CD4-positive, alpha-beta T cell (primary cell): ENCODE measurements at regions of chr2 and their contacts with region 1.

Region 1: GRCh38 chr2:234425619-234426603 is 71.0 kb downstream of the ARL4C start:
- DNase-seq: peak; percentile 70 to 95 (median 82)
- ATAC-seq: peak; percentile 70
- H3K4me3 ChIP-seq: peak overlapping the region; percentile 5
- H3K4me3 Mint-ChIP-seq: peak overlapping the region; percentile 88
- H3K27ac ChIP-seq: peak overlapping the region; percentile 78 to 87
- H3K27ac Mint-ChIP-seq: peak overlapping the region; percentile 97
- H3K4me1 ChIP-seq: peaks cover 90% of the 10 kb centered on the region
- H3K4me1 Mint-ChIP-seq: peaks cover 97% of the 10 kb centered on the region
- H3K27me3 ChIP-seq: no peaks in the 10 kb centered on the region
- H3K27me3 Mint-ChIP-seq: no peaks in the 10 kb centered on the region
- CTCF ChIP-seq: no peak

Region 2: GRCh38 chr2:234308813-234309195 is 117.1 kb before region 1 on chr2:
- CTCF ChIA-PET with region 1: interaction called, 3 read pairs
- POLR2A ChIA-PET with region 1: no interaction called
- intact Hi-C with region 1: loop called in 1 of 2 experiments (anchors 1 kb)
- DNase-seq: peak; percentile 39 to 94 (median 56)
- ATAC-seq: peak; percentile 86
- H3K4me3 ChIP-seq: no peak overlapping the region
- H3K4me3 Mint-ChIP-seq: peak overlapping the region; percentile 68
- H3K27ac ChIP-seq: peak overlapping the region; percentile 50 to 56
- H3K27ac Mint-ChIP-seq: peak overlapping the region; percentile 88
- H3K4me1 ChIP-seq: peaks cover 25% of the 10 kb centered on the region
- H3K4me1 Mint-ChIP-seq: peaks cover 62% of the 10 kb centered on the region
- H3K27me3 ChIP-seq: no peaks in the 10 kb centered on the region
- H3K27me3 Mint-ChIP-seq: no peaks in the 10 kb centered on the region
- CTCF ChIP-seq: no peak

Region 3: DNA sequence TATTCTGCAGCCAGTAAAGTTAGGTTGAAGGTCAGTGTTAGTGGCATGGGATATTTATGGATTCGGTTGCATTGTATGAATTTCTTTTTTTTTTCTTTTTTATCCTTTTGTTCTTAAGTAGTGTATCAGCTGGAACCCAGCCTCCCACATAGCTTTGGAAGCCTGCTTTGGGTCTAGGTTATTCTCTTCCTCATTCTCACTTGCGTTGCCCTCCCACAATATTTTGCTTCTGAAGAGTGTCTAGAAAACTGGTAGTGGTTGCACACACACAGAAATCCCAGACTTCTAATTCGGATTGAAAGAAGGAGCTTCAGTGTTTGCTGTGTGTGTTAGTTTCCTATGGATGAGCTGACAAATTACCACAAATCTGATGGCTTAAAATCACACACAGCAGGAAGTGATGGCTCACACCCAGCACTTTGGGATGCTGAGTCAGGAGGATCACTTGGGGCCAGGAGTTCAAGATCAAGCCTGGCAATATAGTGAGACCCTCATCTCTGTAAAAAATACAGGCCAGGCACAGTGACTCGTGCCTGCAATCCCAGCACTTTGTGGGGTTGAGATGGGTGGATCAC is 33.8 kb before region 1 on chr2:
- CTCF ChIA-PET with region 1: no interaction called
- POLR2A ChIA-PET with region 1: interaction called, 9 read pairs
- intact Hi-C with region 1: loop called in 1 of 2 experiments (anchors 2 kb)
- DNase-seq: no peak
- ATAC-seq: no peak
- H3K4me3 ChIP-seq: no peak overlapping the region
- H3K4me3 Mint-ChIP-seq: no peak overlapping the region
- H3K27ac ChIP-seq: peak overlapping the region; percentile 17 to 26
- H3K27ac Mint-ChIP-seq: peak overlapping the region; percentile 96
- H3K4me1 ChIP-seq: peaks cover 43% of the 10 kb centered on the region
- H3K4me1 Mint-ChIP-seq: peaks cover 68% of the 10 kb centered on the region
- H3K27me3 ChIP-seq: no peaks in the 10 kb centered on the region
- H3K27me3 Mint-ChIP-seq: no peaks in the 10 kb centered on the region
- CTCF ChIP-seq: no peak

Region 4: GRCh38 chr2:234446404-234447076 is 20.6 kb after region 1 on chr2:
- CTCF ChIA-PET with region 1: interaction called, 9 read pairs
- POLR2A ChIA-PET with region 1: interaction called, 376 read pairs
- intact Hi-C with region 1: loop called in 1 of 2 experiments (anchors 1 kb)
- DNase-seq: peak; percentile 61 to 96 (median 74)
- ATAC-seq: peak; percentile 81
- H3K4me3 ChIP-seq: peak overlapping the region; percentile 18
- H3K4me3 Mint-ChIP-seq: peak overlapping the region; percentile 57
- H3K27ac ChIP-seq: peak overlapping the region; percentile 85 to 93
- H3K27ac Mint-ChIP-seq: peak overlapping the region; percentile 92
- H3K4me1 ChIP-seq: peaks cover 74% of the 10 kb centered on the region
- H3K4me1 Mint-ChIP-seq: peaks cover 86% of the 10 kb centered on the region
- H3K27me3 ChIP-seq: no peaks in the 10 kb centered on the region
- H3K27me3 Mint-ChIP-seq: no peaks in the 10 kb centered on the region
- CTCF ChIP-seq: no peak

Region 5: DNA sequence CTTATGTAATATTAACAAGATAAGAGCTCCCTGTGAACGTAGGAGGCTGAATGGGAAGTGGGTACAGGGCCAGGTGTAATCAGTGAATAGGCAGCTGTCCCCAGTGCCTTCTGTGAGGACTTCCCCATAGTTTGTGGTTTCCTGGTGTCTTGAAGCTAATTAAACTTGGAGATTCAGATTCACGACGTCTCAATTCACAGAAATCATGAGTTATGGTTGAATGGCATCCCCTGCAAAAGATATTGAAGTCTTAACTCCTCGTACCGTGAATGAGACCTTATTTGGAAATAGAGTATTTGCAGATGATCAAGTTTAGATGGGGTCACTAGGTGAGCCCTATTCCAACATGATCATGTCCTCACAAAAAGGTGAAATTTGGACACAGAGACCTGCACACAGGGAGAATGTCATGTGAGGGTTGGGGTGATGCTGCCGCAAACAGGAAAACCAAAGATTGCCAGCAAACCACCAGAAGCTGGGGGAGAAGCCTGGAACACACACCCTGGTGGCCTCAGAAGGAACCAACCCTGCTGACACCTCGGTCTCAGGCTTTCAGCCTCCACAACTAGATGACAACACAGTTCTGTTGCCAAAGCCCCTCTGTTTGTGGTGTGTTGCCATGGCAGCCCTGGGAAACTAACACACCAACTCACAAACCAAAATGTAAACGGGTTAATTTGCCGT is 57.8 kb after region 1 on chr2:
- CTCF ChIA-PET with region 1: interaction called, 6 read pairs
- POLR2A ChIA-PET with region 1: interaction called, 31 read pairs
- intact Hi-C with region 1: loop called in 1 of 2 experiments (anchors 2 kb)
- DNase-seq: peak; percentile 62 to 96 (median 78)
- ATAC-seq: peak; percentile 76
- H3K4me3 ChIP-seq: peak overlapping the region; percentile 19
- H3K4me3 Mint-ChIP-seq: peak overlapping the region; percentile 68
- H3K27ac ChIP-seq: peak overlapping the region; percentile 68 to 81
- H3K27ac Mint-ChIP-seq: peak overlapping the region; percentile 98
- H3K4me1 ChIP-seq: peaks cover 74% of the 10 kb centered on the region
- H3K4me1 Mint-ChIP-seq: peaks cover 94% of the 10 kb centered on the region
- H3K27me3 ChIP-seq: no peaks in the 10 kb centered on the region
- H3K27me3 Mint-ChIP-seq: no peaks in the 10 kb centered on the region
- CTCF ChIP-seq: peak; percentile 80

Region 6: DNA sequence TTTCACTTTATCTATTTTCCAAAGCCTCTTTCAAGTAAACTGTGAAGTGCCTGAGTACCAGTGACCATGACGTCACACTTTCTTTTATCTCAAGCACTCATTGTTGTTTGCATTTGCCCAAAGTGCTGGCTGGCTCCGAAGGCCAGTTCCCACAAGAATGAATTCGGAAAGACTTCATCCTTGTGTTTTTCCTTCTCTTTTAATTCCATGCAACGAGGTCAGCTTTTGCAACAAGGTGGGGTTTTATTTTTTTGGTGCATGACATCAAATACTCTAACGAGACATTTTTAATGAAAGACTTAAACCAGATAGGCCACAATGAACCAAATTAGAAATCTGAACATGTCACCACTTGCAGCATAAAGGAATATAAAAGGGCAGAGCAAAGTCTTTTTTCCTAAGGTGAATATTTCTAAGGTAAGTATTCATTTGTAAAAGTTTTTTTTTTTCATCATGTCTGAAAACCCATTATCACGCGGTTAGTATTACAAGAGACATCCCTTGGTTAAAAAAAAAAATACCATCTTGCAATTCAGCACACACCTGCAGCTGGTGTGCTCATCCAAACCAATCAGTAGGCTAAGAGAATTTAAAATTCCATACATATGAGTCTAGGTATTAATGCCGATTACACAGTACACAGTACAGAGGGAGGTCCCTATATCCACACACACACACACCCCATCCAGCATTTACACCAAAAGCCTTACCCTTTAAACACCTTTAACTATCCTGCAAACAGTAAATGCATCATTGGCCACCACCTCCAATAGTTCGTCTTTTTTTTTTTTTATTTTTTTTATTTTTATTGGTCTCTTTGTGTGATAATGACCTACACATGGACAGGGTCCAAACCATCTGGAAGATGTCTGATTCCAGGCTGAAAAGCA is 68.7 kb after region 1 on chr2:
- CTCF ChIA-PET with region 1: interaction called, 4 read pairs
- POLR2A ChIA-PET with region 1: interaction called, 50 read pairs
- intact Hi-C with region 1: loop called (anchors 1 to 2 kb)
- DNase-seq: peak in 8 of 14 experiments; percentile 21 to 80 (median 46)
- ATAC-seq: peak; percentile 33
- H3K4me3 ChIP-seq: peak overlapping the region; percentile 94
- H3K4me3 Mint-ChIP-seq: peak overlapping the region; percentile 98
- H3K27ac ChIP-seq: peak overlapping the region; percentile 70 to 96
- H3K27ac Mint-ChIP-seq: peak overlapping the region; percentile 98
- H3K4me1 ChIP-seq: peaks cover 42% of the 10 kb centered on the region
- H3K4me1 Mint-ChIP-seq: peaks cover 65% of the 10 kb centered on the region
- H3K27me3 ChIP-seq: no peaks in the 10 kb centered on the region
- H3K27me3 Mint-ChIP-seq: peaks cover 5% of the 10 kb centered on the region
- CTCF ChIP-seq: no peak